SK-N-SH (cell line): ENCODE measurements at regions of chr12 and their contacts with region 1.

Region 1: GRCh38 chr12:131830335-131830913 is 2.2 kb downstream of the MMP17 start:
- DNase-seq: peak; percentile 87
- H3K4me3 ChIP-seq: peak overlapping the region; percentile 54 to 73
- H3K27ac ChIP-seq: peak overlapping the region; percentile 50
- H3K4me1 ChIP-seq: peaks cover 3 to 34% of the 10 kb centered on the region in 2 experiments; a peak in 1 of 4 replicates
- H3K27me3 ChIP-seq: no peaks in the 10 kb centered on the region
- CTCF ChIP-seq: peak; percentile 60
- EP300 ChIP-seq: no peak
- RAD21 ChIP-seq: peak; percentile 65

Region 2: DNA sequence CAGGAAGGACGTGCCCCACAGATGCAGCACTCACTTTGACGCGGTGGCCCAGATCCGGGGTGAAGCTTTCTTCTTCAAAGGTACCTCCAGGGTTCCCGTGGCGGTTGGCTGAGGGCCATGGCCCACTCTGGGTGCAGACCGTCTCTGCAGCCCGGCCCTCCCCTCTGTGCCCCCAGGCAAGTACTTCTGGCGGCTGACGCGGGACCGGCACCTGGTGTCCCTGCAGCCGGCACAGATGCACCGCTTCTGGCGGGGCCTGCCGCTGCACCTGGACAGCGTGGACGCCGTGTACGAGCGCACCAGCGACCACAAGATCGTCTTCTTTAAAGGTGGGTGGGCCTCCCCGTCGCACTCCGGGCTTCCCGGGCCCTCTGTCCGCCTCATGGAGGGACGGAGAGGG is 14.7 kb after region 1 on chr12:
- CTCF ChIA-PET with region 1: interaction called, 15 read pairs
- POLR2A ChIA-PET with region 1: no interaction called
- DNase-seq: no peak
- H3K4me3 ChIP-seq: no peak overlapping the region
- H3K27ac ChIP-seq: no peak overlapping the region
- H3K4me1 ChIP-seq: no peaks in the 10 kb centered on the region
- H3K27me3 ChIP-seq: no peaks in the 10 kb centered on the region
- CTCF ChIP-seq: no peak
- EP300 ChIP-seq: no peak
- RAD21 ChIP-seq: no peak

Region 3: DNA sequence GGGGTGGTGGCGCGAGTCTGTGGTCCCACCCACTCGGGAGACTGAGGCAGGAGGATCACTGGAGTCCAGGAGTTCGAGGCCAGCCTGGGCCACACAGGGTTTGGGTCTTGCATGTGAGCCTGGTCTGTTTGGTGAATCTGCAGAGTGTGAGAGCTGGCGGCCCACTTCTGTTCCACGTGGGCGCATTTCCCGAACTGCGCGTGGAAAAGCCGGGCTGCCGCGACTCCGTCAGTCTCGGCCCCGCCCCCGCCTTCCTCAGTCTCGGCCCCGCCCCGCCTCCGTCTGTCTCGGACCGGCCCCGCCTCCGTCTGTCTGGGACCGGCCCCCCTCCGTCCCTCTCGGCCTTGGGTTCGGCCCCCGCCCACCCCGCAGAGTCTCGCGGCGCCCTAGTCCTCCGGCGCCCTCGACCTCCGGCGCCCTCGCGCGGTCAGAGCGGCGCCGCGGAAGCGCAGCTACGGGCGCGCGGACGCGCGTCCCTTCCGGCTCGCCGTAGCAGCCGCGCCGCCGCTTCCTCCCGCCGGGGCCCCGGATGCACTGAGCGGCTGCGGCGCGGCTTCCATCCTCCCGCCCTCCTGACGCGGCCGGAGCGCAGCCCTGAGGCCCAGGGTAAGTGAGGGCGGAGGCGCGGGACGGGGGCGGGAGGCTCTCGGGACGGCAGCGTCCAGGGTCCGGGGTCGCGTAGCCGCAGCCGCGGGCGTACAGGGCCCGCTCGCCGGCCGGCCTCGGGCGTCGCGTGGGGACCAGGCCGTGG is 119.2 kb after region 1 on chr12 and contains the start of gene EP400:
- CTCF ChIA-PET with region 1: interaction called, 27 read pairs
- POLR2A ChIA-PET with region 1: no interaction called
- DNase-seq: peak; percentile 99
- H3K4me3 ChIP-seq: peak within 1 kb of the TSS; percentile 70 to 95
- H3K27ac ChIP-seq: peak within 1 kb of the TSS; percentile 57 to 58
- H3K4me1 ChIP-seq: peaks cover 0 to 4% of the 10 kb centered on the region in 2 experiments; a peak in 1 of 4 replicates
- H3K27me3 ChIP-seq: no peaks in the 10 kb centered on the region
- CTCF ChIP-seq: peak; percentile 50
- EP300 ChIP-seq: peak; percentile 11 to 20; a peak in 1 of 4 replicates
- RAD21 ChIP-seq: peak; percentile 65
- polyA plus RNA-seq, gene EP400: 5.4 and 7.0 TPM in 2 replicates